Sigmoid colon (tissue), 7 donors: ENCODE measurements at regions of chr21 and their contacts with region 1.

Region 1: GRCh38 chr21:32569261-32570230 is 15.8 kb downstream of the TCP10L start:
- DNase-seq: peak; percentile 89
- H3K4me3 ChIP-seq: peak overlapping the region; percentile 35 to 62 (median 56)
- H3K27ac ChIP-seq: peak overlapping the region; percentile 78 to 88 (median 83)
- H3K4me1 ChIP-seq: peaks cover 0 to 13% (median 10%) of the 10 kb centered on the region in 4 donors
- H3K27me3 ChIP-seq: no peaks in the 10 kb centered on the region
- CTCF ChIP-seq: peak; percentile 60 to 85 (median 76)
- EP300 ChIP-seq: no peak
- POLR2A ChIP-seq: no peak

Region 2: GRCh38 chr21:31866077-31866511 is 703.5 kb before region 1 on chr21:
- intact Hi-C with region 1: loop called (anchors 10 kb)
- DNase-seq: peak; percentile 89
- H3K4me3 ChIP-seq: no peak overlapping the region
- H3K27ac ChIP-seq: no peak overlapping the region
- H3K4me1 ChIP-seq: peaks cover 0 to 11% (median 3%) of the 10 kb centered on the region in 4 donors
- H3K27me3 ChIP-seq: no peaks in the 10 kb centered on the region
- CTCF ChIP-seq: peak; percentile 38 to 92 (median 78)
- EP300 ChIP-seq: no peak
- POLR2A ChIP-seq: no peak

Region 3: GRCh38 chr21:32641710-32642698 is 72.5 kb after region 1 on chr21:
- intact Hi-C with region 1: no loop called
- DNase-seq: no peak
- H3K4me3 ChIP-seq: no peak overlapping the region
- H3K27ac ChIP-seq: no peak overlapping the region
- H3K4me1 ChIP-seq: no peaks in the 10 kb centered on the region
- H3K27me3 ChIP-seq: no peaks in the 10 kb centered on the region
- CTCF ChIP-seq: no peak
- EP300 ChIP-seq: no peak
- POLR2A ChIP-seq: no peak